HepG2 (cell line): ENCODE measurements at regions of chr11 and their contacts with region 1.

Region 1: GRCh38 chr11:65506770-65507505 is 8.1 kb downstream of the MALAT1 start:
- DNase-seq: no peak
- ATAC-seq: peak; percentile 41
- H3K4me3 ChIP-seq: no peak overlapping the region
- H3K27ac ChIP-seq: peak overlapping the region; percentile 49
- H3K4me1 ChIP-seq: peaks cover 63% of the 10 kb centered on the region
- H3K27me3 ChIP-seq: no peaks in the 10 kb centered on the region; a peak in 1 of 5 replicates
- CTCF ChIP-seq: no peak
- EP300 ChIP-seq: 0 out of 4 replicates have a peak, but pooled peaks of 1 of the 2 experiments have one; percentile 42
- POLR2A ChIP-seq: peak; percentile 50 to 80
- RAD21 ChIP-seq: peak; percentile 9; the same call in 1 of the 2 replicates

Region 2: GRCh38 chr11:65354265-65355012 is 152.5 kb before region 1 on chr11 and contains the start of gene TIGD3:
- CTCF ChIA-PET with region 1: no interaction called
- POLR2A ChIA-PET with region 1: interaction called, 24 read pairs
- in situ Hi-C with region 1: no loop called
- intact Hi-C with region 1: no loop called
- DNase-seq: peak; percentile 92
- ATAC-seq: peak; percentile 79
- H3K4me3 ChIP-seq: peak within 1 kb of the TSS; percentile 70 to 82 (median 77)
- H3K27ac ChIP-seq: peak within 1 kb of the TSS; percentile 64
- H3K4me1 ChIP-seq: peaks cover 42% of the 10 kb centered on the region
- H3K27me3 ChIP-seq: no peaks in the 10 kb centered on the region
- CTCF ChIP-seq: peak; percentile 33
- EP300 ChIP-seq: no peak
- POLR2A ChIP-seq: peak; percentile 45 to 92
- RAD21 ChIP-seq: 0 out of 2 replicates have a peak, but pooled peaks have one; percentile 15
- total RNA-seq, gene TIGD3: 4.0 and 4.9 TPM in 2 replicates

Region 3: DNA sequence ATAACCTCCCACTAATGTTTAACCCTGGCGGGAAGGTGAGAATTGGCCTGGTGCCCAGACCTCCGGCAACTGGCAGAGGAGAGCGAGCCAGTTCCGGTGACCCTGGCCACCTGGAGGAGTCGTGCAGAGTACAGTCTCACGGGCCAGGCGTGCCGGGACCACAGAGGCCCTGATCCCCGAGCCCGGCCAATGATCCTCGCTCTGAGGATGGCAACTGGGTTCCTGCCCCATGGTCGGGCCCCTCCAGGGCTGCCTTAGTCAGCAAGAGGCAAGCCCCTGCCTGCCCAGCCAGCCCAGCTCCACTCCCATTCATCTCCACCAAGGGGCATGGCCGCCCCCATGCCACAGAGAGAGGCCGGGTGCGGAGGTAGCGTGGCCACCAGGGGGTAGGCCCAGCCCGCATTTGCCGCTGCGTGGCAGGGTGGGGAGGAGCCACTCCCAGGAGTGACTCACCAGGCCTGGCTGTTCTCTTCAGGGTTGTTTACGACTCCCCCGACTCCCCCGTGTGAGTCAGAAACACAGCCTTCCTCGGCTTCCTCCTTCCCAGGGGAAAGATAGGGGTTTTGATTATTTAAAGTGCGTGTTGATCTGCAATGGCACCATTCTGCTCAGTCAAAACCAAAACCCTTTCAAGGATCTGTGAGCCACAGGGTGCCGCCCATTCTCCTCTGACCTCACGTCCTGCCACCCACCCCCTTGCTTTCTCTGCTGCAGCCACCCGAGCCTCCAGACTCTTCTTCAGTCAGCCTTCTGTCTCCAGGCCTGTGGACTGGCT is 124.7 kb before region 1 on chr11 and contains the start of gene SLC25A45:
- CTCF ChIA-PET with region 1: no interaction called
- POLR2A ChIA-PET with region 1: interaction called, 21 read pairs
- in situ Hi-C with region 1: no loop called
- intact Hi-C with region 1: no loop called
- DNase-seq: peak; percentile 87
- ATAC-seq: peak; percentile 80
- H3K4me3 ChIP-seq: peak within 1 kb of the TSS; percentile 57 to 82 (median 65)
- H3K27ac ChIP-seq: peak within 1 kb of the TSS; percentile 88
- H3K4me1 ChIP-seq: peaks cover 89% of the 10 kb centered on the region
- H3K27me3 ChIP-seq: no peaks in the 10 kb centered on the region; a peak in 1 of 5 replicates
- CTCF ChIP-seq: peak; percentile 94
- EP300 ChIP-seq: peak in 1 of 2 experiments; percentile 76; a peak in 2 of 4 replicates
- POLR2A ChIP-seq: peak in 1 of 2 experiments; percentile 84; a peak in 2 of 4 replicates
- RAD21 ChIP-seq: peak; percentile 95
- total RNA-seq, gene SLC25A45: 2.1 and 3.4 TPM in 2 replicates

Region 4: DNA sequence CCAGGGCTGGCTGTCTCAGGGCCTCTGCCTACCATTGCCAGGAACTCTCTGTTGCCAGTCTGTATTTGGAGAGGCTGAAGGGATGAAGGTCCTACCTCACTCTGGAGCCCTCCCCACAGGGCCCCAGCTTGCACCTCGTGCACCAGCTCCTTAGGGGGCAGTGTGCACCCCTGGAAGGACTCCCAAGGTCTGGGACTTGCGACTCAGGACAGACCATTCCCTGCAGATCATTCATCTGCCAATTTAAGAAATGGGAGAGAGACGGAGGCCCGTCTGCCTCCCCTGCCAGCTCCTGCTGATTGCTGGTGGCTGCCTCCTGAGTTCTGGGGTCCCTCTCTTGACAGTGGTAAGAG is 35.6 kb before region 1 on chr11:
- CTCF ChIA-PET with region 1: interaction called, 9 read pairs
- POLR2A ChIA-PET with region 1: interaction called, 1,590 read pairs
- in situ Hi-C with region 1: loop called (anchors 5 kb)
- intact Hi-C with region 1: loop called (anchors 2 kb)
- DNase-seq: peak; percentile 73
- ATAC-seq: peak; percentile 92
- H3K4me3 ChIP-seq: peak overlapping the region; percentile 31 to 63 (median 33); a peak in 5 of 6 replicates
- H3K27ac ChIP-seq: no peak overlapping the region
- H3K4me1 ChIP-seq: peaks cover 57% of the 10 kb centered on the region
- H3K27me3 ChIP-seq: no peaks in the 10 kb centered on the region; a peak in 1 of 5 replicates
- CTCF ChIP-seq: peak; percentile 90
- EP300 ChIP-seq: no peak
- POLR2A ChIP-seq: no peak; a peak in 1 of 4 replicates
- RAD21 ChIP-seq: peak; percentile 86

Region 5: DNA sequence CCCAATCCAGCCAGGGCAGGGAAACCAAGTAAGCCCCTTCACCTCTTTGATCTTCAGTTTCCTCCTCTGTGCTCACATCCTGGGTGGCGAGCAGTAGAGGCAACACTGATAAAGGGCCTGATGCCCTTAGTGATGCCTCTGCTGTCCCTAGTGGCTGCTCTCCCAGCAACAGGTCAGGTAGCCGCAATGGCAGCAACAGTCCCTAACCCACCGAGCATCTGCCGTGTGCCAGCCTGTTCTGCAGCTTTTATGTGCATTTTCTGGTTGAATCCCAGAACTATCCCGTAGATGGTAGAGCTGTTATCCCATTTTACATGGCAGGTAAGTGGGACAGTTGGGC is 23.2 kb after region 1 on chr11:
- CTCF ChIA-PET with region 1: no interaction called
- POLR2A ChIA-PET with region 1: interaction called, 11 read pairs
- in situ Hi-C with region 1: no loop called
- intact Hi-C with region 1: no loop called
- DNase-seq: no peak
- ATAC-seq: peak; percentile 62
- H3K4me3 ChIP-seq: no peak overlapping the region
- H3K27ac ChIP-seq: peak overlapping the region; percentile 66
- H3K4me1 ChIP-seq: peaks cover 47% of the 10 kb centered on the region
- H3K27me3 ChIP-seq: no peaks in the 10 kb centered on the region; a peak in 1 of 5 replicates
- CTCF ChIP-seq: no peak
- EP300 ChIP-seq: no peak
- POLR2A ChIP-seq: no peak
- RAD21 ChIP-seq: no peak